ENCODE measurements at regions of chr2 and their contacts with region 1.

Region 1: DNA sequence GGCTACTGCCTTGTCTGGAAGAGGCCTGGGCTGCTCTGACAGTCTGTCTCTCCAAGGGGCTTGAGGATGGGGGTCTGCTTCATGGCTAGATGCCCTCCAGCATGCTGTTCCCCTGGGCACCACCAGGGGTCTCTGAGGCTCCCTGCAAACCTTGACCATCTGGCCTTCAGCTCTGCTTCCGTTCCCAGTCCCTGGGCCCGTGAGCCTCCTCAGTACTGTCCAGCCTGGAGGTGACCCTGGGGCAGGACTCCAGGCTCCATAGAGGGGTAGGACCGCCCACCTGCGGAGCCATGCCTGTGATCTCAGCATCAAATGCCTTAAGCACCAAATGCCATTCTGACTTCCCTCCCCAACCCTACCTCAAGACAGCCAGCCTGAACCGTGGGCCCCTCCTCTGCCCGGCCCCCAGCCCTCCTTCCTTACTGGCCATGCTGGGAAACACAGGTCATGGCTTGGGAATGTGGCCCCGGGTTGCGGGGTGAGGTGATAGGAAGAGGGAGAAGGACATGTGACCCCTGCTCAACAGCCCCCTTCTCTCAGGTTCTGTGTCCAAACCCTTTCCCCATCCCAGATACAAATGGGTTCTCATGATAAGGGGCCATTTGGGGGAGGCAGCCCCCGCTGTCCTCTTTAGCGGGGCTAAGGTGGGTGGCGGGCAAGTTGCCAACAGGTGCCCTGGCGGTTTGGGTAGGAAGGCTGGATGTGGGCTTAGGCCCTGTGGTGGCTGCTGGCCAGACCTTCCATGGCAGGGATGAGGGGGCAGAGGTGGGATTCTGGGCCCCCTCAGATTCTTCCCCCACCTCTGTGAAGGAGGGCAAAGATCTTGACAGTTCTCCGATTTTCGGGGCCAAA is 25.0 kb downstream of the SPEG start:
- DNase-seq: peak; percentile 86
- CTCF ChIP-seq: peak; percentile 83

Region 2: DNA sequence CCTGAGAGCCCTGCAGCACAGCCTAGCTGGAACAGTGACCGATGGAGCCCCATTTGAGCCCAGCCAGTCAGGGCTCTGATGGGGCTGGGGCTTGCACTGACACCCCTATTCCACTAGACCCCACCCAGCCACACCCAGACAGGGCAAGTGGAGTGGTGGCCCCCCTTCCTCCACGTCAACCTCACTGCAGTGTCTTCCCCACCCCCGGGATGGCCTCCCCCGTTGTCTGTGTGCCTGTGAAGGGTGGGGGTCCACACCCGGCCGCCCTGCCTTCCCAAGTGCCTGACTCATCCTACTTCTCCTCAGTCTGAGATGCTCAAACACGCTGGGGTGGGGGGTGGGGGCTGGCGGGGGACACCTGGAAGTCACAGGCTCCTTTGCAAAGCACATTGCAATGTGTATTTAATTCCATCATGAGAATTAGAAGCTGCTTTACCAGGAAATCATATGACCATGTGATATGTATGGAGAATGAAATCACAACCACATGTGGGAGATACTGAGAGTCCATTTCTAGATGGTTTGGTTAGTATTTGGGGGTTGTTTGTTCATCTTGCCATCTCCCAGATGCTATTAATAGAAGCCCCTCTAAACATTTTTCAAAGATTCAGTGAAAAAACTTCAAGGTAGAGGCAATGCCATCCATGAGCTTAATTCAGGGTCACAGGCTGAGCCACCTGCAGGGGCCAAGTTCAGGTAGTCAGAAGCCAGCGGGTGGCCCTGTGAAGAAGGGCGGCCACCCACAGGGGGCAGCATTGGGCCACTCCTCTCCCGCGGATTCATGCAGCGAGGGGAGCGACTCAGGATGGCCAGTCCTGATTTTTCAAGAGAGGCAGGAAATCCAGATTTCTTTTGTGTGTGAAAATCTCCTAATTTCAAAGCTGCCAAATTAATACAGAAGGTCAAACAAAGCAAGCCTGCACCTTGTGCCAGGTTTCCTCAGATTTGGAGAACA is 16.3 kb after region 1 on chr2:
- CTCF ChIA-PET with region 1: interaction called, 13 read pairs
- POLR2A ChIA-PET with region 1: no interaction called
- DNase-seq: peak; percentile 79
- CTCF ChIP-seq: peak; percentile 84

Measured in GM10248 (cell line).